IMR-90 (cell line): ENCODE measurements at regions of chr9 and their contacts with region 1.

Region 1: GRCh38 chr9:105299190-105299854 is 54.9 kb downstream of the SLC44A1 start:
- DNase-seq: peak; percentile 98
- ATAC-seq: peak; percentile 89
- H3K4me3 ChIP-seq: no peak overlapping the region
- H3K27ac ChIP-seq: peak overlapping the region; percentile 91
- H3K4me1 ChIP-seq: peaks cover 19% of the 10 kb centered on the region
- H3K27me3 ChIP-seq: no peaks in the 10 kb centered on the region
- CTCF ChIP-seq: no peak
- POLR2A ChIP-seq: peak; percentile 73
- RAD21 ChIP-seq: no peak; the same call in 1 of the 2 replicates

Region 2: DNA sequence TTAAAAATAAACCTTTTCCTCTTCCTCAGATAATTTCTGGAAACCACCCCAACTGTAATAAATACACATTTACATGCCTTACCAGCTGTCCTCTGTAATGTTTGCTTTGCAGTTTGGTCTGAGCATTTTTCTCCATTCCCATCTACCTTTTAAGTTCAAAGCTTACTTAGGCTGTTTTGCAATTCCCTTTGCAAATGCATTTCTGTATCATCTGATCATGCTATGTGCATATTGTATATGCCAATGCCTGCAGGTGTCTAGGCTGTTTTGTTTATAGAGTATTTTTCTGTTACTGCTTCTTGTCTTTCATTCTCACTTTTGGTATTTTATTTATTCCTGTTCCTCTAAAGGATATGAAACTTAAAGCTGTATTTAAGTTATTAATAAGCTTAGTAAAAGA is 31.4 kb after region 1 on chr9:
- CTCF ChIA-PET with region 1: no interaction called
- POLR2A ChIA-PET with region 1: no interaction called
- dilution Hi-C with region 1: no loop called
- in situ Hi-C with region 1: no loop called
- intact Hi-C with region 1: loop called (anchors 5 kb)
- DNase-seq: peak; percentile 16
- ATAC-seq: 0 out of 2 replicates have a peak, but pooled peaks have one; percentile 13
- H3K4me3 ChIP-seq: no peak overlapping the region
- H3K27ac ChIP-seq: no peak overlapping the region
- H3K4me1 ChIP-seq: no peaks in the 10 kb centered on the region
- H3K27me3 ChIP-seq: no peaks in the 10 kb centered on the region
- CTCF ChIP-seq: no peak
- POLR2A ChIP-seq: no peak
- RAD21 ChIP-seq: no peak

Region 3: GRCh38 chr9:105858006-105858690 is 558.8 kb after region 1 on chr9:
- CTCF ChIA-PET with region 1: no interaction called
- POLR2A ChIA-PET with region 1: no interaction called
- dilution Hi-C with region 1: no loop called
- in situ Hi-C with region 1: no loop called
- intact Hi-C with region 1: no loop called
- DNase-seq: no peak
- ATAC-seq: no peak
- H3K4me3 ChIP-seq: no peak overlapping the region
- H3K27ac ChIP-seq: no peak overlapping the region
- H3K4me1 ChIP-seq: no peaks in the 10 kb centered on the region
- H3K27me3 ChIP-seq: no peaks in the 10 kb centered on the region
- CTCF ChIP-seq: no peak
- POLR2A ChIP-seq: no peak
- RAD21 ChIP-seq: no peak